Common myeloid progenitor, CD34-positive (primary cell): ENCODE measurements at regions of chr12 and their contacts with region 1.

Region 1: GRCh38 chr12:31672521-31672920 is 13.0 kb downstream of the ETFBKMT start:
- DNase-seq: no peak
- H3K4me3 ChIP-seq: no peak overlapping the region
- H3K27ac ChIP-seq: no peak overlapping the region
- H3K4me1 ChIP-seq: no peaks in the 10 kb centered on the region
- H3K27me3 ChIP-seq: no peaks in the 10 kb centered on the region

Region 2: GRCh38 chr12:31651893-31652521 is 20.5 kb before region 1 on chr12:
- CTCF ChIA-PET with region 1: interaction called, 16 read pairs
- POLR2A ChIA-PET with region 1: no interaction called
- DNase-seq: no peak
- H3K4me3 ChIP-seq: peak overlapping the region in 1 of 7 experiments; percentile 38
- H3K27ac ChIP-seq: no peak overlapping the region
- H3K4me1 ChIP-seq: peaks cover 0 to 9% (median 4%) of the 10 kb centered on the region in 4 experiments
- H3K27me3 ChIP-seq: no peaks in the 10 kb centered on the region

Region 3: DNA sequence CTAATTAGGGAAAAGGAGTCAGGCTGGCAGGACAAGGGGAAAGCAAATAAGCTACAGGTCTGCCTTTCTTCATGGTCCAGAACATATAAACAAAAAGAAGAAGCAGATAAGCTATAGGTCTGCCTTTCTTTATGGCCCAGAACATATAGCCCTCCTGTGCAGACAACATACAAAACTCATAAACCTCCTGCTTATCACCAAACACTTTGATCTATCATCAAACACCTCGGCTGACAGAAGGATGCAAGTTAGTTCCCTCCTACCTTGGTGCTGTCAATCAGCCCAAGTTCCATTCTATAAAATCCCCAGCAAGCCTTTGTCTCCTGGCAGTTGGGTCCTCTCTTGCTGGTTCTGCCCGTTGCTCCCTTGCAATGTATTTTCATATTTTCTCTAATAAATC is 33.1 kb after region 1 on chr12:
- CTCF ChIA-PET with region 1: no interaction called
- POLR2A ChIA-PET with region 1: no interaction called
- DNase-seq: no peak
- H3K4me3 ChIP-seq: no peak overlapping the region
- H3K27ac ChIP-seq: no peak overlapping the region
- H3K4me1 ChIP-seq: peaks cover 0 to 1% (median 0%) of the 10 kb centered on the region in 4 experiments
- H3K27me3 ChIP-seq: no peaks in the 10 kb centered on the region